ENCODE measurements at regions of chr10 and their contacts with region 1.

Region 1: GRCh38 chr10:72364239-72364777 is 9.6 kb upstream of the DNAJB12 start:
- DNase-seq: peak; percentile 94
- H3K4me3 ChIP-seq: peak overlapping the region in 1 of 4 donors; percentile 20
- H3K27ac ChIP-seq: peak overlapping the region; percentile 31 to 65 (median 46)
- H3K4me1 ChIP-seq: peaks cover 0 to 13% (median 6%) of the 10 kb centered on the region in 4 donors
- H3K27me3 ChIP-seq: no peaks in the 10 kb centered on the region
- CTCF ChIP-seq: peak; percentile 84 to 91 (median 90)
- EP300 ChIP-seq: no peak
- POLR2A ChIP-seq: no peak

Region 2: GRCh38 chr10:72260588-72261322 is 103.6 kb before region 1 on chr10:
- intact Hi-C with region 1: no loop called
- DNase-seq: peak; percentile 93
- H3K4me3 ChIP-seq: peak overlapping the region; percentile 26 to 53 (median 48)
- H3K27ac ChIP-seq: peak overlapping the region; percentile 83 to 91 (median 88)
- H3K4me1 ChIP-seq: peaks cover 0 to 51% (median 51%) of the 10 kb centered on the region in 4 donors
- H3K27me3 ChIP-seq: no peaks in the 10 kb centered on the region
- CTCF ChIP-seq: no peak
- EP300 ChIP-seq: peak in 1 of 4 donors; percentile 51
- POLR2A ChIP-seq: peak; percentile 20 to 51

Region 3: DNA sequence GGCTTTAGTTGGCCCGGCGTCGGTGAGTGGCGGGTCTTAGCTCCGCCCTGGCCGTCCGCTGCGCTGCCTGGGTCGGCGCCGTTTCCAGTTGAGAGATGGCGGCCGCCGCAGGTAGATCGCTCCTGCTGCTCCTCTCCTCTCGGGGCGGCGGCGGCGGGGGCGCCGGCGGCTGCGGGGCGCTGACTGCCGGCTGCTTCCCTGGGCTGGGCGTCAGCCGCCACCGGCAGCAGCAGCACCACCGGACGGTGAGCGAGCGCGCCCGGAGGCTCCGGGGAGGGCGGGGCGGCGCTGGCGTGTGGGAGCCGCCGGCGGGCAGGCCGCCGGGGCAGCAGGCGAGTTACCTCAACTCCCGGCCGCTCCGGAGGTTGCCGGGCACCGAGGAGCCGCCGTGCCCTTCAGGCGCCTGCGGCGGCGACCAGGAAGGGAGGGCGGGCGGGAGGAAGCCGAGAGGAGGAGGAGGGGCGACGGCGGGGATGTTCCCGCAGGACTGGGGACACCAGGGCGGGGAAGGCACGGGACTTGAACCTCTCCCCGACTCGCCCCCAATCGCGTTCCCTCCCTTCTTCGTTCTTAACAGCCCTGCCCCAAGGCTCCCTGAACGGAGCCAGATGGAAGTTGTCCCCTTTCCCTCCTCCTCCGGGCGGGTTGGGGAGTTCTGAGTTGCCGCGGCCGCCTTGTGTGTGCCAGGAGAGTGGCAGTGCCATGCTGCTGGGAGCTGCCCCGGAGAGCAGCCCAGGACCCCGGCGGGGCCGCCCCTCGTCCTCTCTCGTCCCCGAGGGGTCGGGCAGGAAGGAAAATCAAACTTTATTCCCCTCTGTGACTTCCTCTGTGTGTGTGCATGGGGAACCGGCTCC is 328.0 kb after region 1 on chr10 and contains the start of gene MCU:
- intact Hi-C with region 1: loop called (anchors 2 kb)
- DNase-seq: peak; percentile 97
- H3K4me3 ChIP-seq: peak within 1 kb of the TSS; percentile 47 to 84 (median 65)
- H3K27ac ChIP-seq: peak within 1 kb of the TSS; percentile 84 to 89 (median 86)
- H3K4me1 ChIP-seq: peaks cover 0 to 36% (median 27%) of the 10 kb centered on the region in 4 donors
- H3K27me3 ChIP-seq: no peaks in the 10 kb centered on the region
- CTCF ChIP-seq: no peak
- EP300 ChIP-seq: no peak
- POLR2A ChIP-seq: peak in 1 of 2 donors; percentile 11
- total RNA-seq, gene MCU: 14.7 to 19.4 (median 18.2) TPM

Region 4: GRCh38 chr10:72834183-72834825 is 470.0 kb after region 1 on chr10:
- intact Hi-C with region 1: loop called (anchors 1 kb)
- DNase-seq: peak; percentile 74
- H3K4me3 ChIP-seq: no peak overlapping the region
- H3K27ac ChIP-seq: no peak overlapping the region
- H3K4me1 ChIP-seq: peaks cover 0 to 23% (median 0%) of the 10 kb centered on the region in 4 donors
- H3K27me3 ChIP-seq: no peaks in the 10 kb centered on the region
- CTCF ChIP-seq: peak; percentile 31 to 64 (median 60)
- EP300 ChIP-seq: no peak
- POLR2A ChIP-seq: no peak

Region 5: DNA sequence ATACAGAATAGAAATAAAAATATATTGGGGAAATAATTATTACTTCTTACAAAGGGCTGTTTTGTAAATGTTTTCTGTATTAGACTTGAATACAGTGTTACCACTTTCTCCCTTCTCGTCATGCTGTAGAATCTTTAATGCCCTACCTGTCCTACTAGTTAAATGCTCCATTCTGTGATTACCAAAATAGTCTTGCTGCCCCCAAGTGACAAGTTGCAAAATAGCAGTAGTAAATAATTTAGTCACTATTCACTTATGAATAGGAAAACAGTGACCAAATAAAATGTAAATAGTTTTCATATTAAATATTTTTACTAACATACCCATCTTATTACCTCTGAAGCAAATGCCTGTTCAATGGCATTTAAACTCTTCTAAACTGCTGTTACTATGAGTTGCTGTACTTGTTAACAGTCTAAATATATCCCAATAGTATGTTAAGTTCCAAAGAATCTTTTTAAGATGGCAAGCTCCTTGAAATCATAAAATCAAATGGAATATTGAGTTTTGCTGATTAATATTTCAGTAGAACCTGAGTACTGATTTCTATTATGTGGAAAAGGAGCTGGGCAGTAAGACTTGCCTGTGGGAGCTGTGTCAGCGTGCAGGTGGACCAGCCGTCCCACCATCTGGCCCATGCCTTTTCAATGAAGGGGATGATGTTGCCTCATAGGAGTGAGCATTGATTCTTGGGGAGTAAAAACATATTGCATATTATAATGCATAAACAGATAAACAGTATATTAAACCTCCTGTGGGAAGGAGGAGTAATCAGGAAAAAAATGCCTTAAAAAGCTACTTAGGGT is 511.1 kb after region 1 on chr10:
- intact Hi-C with region 1: loop called (anchors 5 kb)
- DNase-seq: no peak
- H3K4me3 ChIP-seq: no peak overlapping the region
- H3K27ac ChIP-seq: no peak overlapping the region
- H3K4me1 ChIP-seq: no peaks in the 10 kb centered on the region
- H3K27me3 ChIP-seq: no peaks in the 10 kb centered on the region
- CTCF ChIP-seq: peak in 1 of 4 experiments; percentile 18
- EP300 ChIP-seq: no peak
- POLR2A ChIP-seq: no peak

Region 6: DNA sequence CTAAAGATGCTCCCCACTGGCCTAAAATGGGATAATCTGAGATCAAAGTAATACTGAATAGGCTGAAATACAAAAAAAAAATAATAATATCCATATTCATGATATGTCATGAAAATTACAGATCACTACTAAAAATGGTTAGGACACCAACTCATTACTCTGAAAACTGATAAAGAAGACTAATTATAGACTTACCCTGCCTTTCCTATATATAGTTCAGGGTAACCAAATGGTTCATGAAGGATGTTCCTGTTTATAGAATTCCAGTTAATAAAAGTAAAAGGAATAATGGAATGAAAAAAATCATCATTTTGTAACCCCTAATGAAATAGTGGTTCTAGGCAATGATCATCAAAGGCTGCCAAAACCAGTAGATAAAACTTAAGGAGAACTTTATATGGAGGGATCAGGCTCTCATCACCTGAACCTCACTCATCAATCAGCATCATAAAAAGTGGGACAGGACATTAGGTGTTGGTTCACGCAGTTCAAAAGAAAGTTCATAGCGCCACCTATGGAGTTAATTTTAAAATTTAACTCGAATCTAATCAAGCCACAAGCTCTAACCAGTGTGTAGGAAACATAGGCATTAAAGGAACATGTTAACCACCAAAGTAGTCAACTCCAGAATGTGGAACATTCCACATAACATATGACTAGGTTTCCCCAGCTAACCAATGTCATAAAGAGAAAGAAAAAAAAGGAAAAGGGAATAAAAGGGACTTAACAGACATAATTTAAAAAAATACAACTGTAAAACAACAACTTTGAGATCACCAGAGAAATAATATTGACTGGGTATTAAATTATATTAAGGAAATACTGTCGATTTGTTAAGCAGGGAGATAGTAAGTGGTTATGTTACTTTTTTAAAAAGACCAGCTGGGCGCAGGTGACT is 696.7 kb after region 1 on chr10:
- intact Hi-C with region 1: loop called (anchors 10 kb)
- DNase-seq: no peak
- H3K4me3 ChIP-seq: no peak overlapping the region
- H3K27ac ChIP-seq: no peak overlapping the region
- H3K4me1 ChIP-seq: no peaks in the 10 kb centered on the region
- H3K27me3 ChIP-seq: no peaks in the 10 kb centered on the region
- CTCF ChIP-seq: peak in 2 of 4 experiments; percentile 6 to 11
- EP300 ChIP-seq: no peak
- POLR2A ChIP-seq: no peak

Region 7: GRCh38 chr10:73209705-73210104 is 845.4 kb after region 1 on chr10:
- intact Hi-C with region 1: no loop called
- DNase-seq: no peak
- H3K4me3 ChIP-seq: no peak overlapping the region
- H3K27ac ChIP-seq: no peak overlapping the region
- H3K4me1 ChIP-seq: no peaks in the 10 kb centered on the region
- H3K27me3 ChIP-seq: no peaks in the 10 kb centered on the region
- CTCF ChIP-seq: no peak
- EP300 ChIP-seq: no peak
- POLR2A ChIP-seq: no peak